IMR-90 (cell line): ENCODE measurements at regions of chr7 and their contacts with region 1.

Region 1: DNA sequence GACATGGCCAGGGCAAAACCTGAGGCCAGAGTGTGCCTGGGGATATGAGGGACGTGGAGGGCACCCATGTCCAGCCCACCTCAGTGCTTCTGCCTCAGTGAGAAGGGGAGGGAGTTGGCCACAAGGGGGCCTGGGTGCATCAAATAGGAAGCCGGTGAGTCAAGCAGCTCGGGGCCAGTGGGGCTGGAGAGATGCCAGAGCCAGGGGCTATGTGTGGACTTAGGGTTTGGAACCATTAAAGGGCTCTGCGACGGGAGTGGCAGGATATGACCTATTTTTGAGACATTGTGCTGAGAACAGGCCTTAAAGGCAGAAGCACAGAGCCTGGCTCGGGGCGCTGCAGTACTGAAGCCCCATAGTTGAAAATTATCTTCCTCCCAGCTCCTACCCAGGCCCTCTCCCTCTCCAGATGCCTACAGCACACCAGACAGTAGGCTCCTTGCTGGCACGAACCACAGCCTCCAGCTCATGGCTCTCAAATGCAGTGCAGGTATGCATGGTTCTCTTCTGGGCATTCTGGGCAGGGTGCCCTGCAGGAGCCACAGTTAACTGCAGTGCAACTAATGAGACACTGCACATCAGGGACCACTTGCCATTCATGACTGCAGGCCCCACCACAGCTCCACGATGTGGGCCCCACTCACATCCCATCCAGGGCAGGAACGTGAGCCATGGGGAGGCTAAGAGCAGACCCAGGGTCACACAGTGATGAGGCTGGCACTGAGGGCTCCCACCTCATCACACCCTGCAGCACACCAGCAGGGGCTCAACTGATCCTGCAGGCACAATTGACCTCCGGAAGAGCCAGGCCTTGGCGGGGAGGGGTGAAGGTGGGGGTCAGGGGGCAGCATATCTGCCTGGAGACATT is 7.2 kb upstream of the PGAM2 start:
- DNase-seq: peak; percentile 84
- ATAC-seq: peak; percentile 80
- H3K4me3 ChIP-seq: no peak overlapping the region
- H3K27ac ChIP-seq: no peak overlapping the region
- H3K4me1 ChIP-seq: peaks cover 12% of the 10 kb centered on the region
- H3K27me3 ChIP-seq: no peaks in the 10 kb centered on the region
- CTCF ChIP-seq: peak; percentile 88
- POLR2A ChIP-seq: peak; percentile 60; the same call in 1 of the 2 replicates
- RAD21 ChIP-seq: peak; percentile 82

Region 2: DNA sequence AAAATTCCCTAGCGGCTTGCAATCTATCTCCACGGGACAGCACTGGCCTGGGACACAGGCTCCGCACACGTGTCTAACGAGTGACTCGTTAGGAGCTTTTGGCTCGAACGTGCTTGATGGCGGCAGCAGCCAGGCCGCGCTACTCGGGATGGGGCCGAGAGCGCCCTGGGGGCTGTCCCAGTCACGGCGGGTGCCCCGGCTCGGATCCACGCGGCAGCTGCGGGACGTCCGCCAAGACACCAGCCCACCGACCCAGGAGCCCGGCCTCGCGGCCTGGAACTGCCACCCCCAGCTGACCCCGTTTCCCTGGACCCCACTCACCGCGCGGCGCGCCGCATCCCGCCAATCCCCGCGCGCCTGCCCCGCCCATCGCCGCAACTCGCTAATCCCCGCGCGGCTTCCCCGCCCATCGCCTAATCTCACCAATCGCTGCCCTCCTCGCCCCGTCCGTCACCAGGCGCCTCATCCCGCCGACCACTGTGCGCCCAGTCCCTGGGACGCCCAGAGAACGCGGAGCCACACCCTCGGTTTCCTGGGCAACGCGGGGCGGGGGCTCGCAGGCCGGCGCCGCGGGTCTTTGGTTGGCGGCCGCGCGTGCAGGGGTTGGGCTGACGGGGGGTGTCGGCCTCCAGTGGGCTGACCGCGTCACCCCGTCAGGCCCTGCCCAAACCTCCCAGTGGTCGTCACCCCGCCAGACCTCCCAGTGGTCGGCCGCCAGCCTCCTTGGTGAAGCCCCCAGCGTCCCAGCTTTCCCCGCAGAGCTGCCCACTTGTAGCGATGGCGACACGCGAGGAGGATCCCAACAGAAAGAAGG is 50.8 kb after region 1 on chr7 and contains the start of gene POLD2:
- CTCF ChIA-PET with region 1: no interaction called
- POLR2A ChIA-PET with region 1: no interaction called
- dilution Hi-C with region 1: no loop called
- in situ Hi-C with region 1: no loop called
- intact Hi-C with region 1: loop called (anchors 1 kb)
- DNase-seq: peak; percentile 92
- ATAC-seq: peak; percentile 100
- H3K4me3 ChIP-seq: peak within 1 kb of the TSS; percentile 92
- H3K27ac ChIP-seq: peak within 1 kb of the TSS; percentile 62
- H3K4me1 ChIP-seq: peaks cover 6% of the 10 kb centered on the region
- H3K27me3 ChIP-seq: no peaks in the 10 kb centered on the region
- CTCF ChIP-seq: no peak
- POLR2A ChIP-seq: peak; percentile 61
- RAD21 ChIP-seq: no peak; the same call in 1 of the 2 replicates
- total RNA-seq, gene POLD2: 136 and 163 TPM in 2 replicates